PC-3 (cell line): ENCODE measurements at regions of chr10 and their contacts with region 1.

Region 1: DNA sequence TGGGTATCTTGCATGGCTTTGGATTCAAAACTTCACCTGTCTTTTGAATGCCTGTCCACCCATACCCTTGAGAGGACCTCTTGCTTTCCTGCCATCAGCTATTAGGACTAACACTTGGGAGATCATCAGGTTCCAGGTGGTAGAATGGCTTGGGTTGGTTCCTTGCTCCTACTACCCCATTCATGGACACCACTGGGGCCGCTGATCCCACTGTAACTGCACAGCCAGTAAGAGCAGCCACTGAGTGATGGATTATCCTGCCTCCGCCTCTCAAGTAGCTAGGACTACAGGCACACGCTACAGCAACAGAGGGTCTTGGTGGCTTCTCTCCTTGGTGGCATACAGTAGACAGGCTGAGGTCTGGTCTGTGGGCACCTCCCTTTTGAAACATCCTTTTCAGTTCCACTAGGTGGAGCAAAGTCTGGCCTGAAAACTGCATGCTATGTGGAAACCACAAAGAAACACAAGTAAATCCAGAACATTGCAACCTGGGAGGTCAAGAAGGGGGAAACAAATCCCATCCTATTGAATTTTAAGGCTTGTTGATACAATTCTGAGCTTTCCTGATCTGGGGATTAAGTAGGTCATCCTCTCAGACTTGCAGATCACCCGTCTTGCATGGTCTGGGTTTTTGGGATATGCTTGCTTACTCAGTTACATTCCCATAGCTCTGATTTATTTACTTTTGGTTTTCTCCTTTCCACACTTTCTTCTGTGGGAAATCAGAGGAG is 9.4 kb downstream of the WBP1L start:
- DNase-seq: peak; percentile 37
- ATAC-seq: peak; percentile 80
- H3K4me3 ChIP-seq: no peak overlapping the region
- H3K27ac ChIP-seq: peak overlapping the region; percentile 12; the same call in 1 of the 2 replicates
- H3K4me1 ChIP-seq: no peaks in the 10 kb centered on the region; the same call in 1 of the 2 replicates
- H3K27me3 ChIP-seq: no peaks in the 10 kb centered on the region
- CTCF ChIP-seq: peak; percentile 66

Region 2: GRCh38 chr10:102729029-102730026 is 23.8 kb before region 1 on chr10:
- CTCF ChIA-PET with region 1: no interaction called
- POLR2A ChIA-PET with region 1: no interaction called
- intact Hi-C with region 1: no loop called
- DNase-seq: peak; percentile 70
- ATAC-seq: peak; percentile 100
- H3K4me3 ChIP-seq: no peak overlapping the region
- H3K27ac ChIP-seq: no peak overlapping the region
- H3K4me1 ChIP-seq: no peaks in the 10 kb centered on the region
- H3K27me3 ChIP-seq: no peaks in the 10 kb centered on the region
- CTCF ChIP-seq: peak; percentile 85

Region 3: DNA sequence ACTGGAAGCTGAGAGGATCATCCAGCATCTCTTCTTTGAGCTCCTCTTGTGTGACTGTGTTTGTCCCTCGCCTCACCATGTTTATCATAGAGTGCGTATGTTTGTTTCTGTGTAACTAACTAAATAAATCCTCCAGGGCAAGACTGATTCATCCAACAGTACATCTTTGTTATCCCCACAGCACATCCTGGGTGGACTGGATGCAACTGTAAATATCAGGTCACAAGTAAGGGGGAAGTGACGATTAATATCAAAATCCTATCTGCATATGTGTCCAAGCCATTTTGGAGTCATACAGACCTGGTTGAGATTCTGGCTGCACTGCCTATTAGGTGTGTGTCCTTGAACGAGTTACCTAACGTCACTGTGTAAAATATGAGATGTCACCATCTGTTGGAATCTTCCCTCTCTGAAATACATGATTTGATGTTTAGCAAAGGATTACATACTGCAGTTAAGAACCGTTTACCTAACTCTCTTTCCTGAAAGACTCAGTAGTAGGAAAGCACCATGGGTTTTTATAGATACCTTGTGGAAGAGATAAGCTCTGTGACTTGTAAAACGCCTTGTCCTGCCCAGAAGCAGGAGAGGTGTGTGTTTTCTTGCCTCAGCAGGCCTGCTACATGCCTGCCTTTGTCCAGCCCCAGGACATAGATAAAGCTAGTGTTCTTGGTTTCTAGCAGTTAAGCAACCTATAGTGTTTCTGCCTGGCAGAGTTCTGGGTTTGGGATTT is 16.4 kb after region 1 on chr10:
- CTCF ChIA-PET with region 1: no interaction called
- POLR2A ChIA-PET with region 1: no interaction called
- intact Hi-C with region 1: loop called (anchors 1 kb)
- DNase-seq: peak; percentile 85
- ATAC-seq: peak; percentile 92
- H3K4me3 ChIP-seq: no peak overlapping the region
- H3K27ac ChIP-seq: peak overlapping the region; percentile 90
- H3K4me1 ChIP-seq: peaks cover 18% of the 10 kb centered on the region
- H3K27me3 ChIP-seq: no peaks in the 10 kb centered on the region
- CTCF ChIP-seq: no peak